A673 (cell line): ENCODE measurements at regions of chr12 and their contacts with region 1.

Region 1: GRCh38 chr12:92408072-92408900 is 262.6 kb upstream of the BTG1 start:
- DNase-seq: peak; percentile 64
- H3K4me3 ChIP-seq: no peak overlapping the region
- H3K27ac ChIP-seq: no peak overlapping the region
- H3K4me1 ChIP-seq: no peaks in the 10 kb centered on the region
- H3K27me3 ChIP-seq: no peaks in the 10 kb centered on the region
- CTCF ChIP-seq: peak; percentile 78

Region 2: GRCh38 chr12:92424338-92424737 is 16.1 kb after region 1 on chr12:
- CTCF ChIA-PET with region 1: interaction called, 12 read pairs
- POLR2A ChIA-PET with region 1: no interaction called
- intact Hi-C with region 1: no loop called
- DNase-seq: peak; percentile 47
- H3K4me3 ChIP-seq: no peak overlapping the region
- H3K27ac ChIP-seq: no peak overlapping the region
- H3K4me1 ChIP-seq: peaks cover 22% of the 10 kb centered on the region
- H3K27me3 ChIP-seq: no peaks in the 10 kb centered on the region
- CTCF ChIP-seq: no peak